GM10248 (cell line): ENCODE measurements at regions of chr5 and their contacts with region 1.

Region 1: DNA sequence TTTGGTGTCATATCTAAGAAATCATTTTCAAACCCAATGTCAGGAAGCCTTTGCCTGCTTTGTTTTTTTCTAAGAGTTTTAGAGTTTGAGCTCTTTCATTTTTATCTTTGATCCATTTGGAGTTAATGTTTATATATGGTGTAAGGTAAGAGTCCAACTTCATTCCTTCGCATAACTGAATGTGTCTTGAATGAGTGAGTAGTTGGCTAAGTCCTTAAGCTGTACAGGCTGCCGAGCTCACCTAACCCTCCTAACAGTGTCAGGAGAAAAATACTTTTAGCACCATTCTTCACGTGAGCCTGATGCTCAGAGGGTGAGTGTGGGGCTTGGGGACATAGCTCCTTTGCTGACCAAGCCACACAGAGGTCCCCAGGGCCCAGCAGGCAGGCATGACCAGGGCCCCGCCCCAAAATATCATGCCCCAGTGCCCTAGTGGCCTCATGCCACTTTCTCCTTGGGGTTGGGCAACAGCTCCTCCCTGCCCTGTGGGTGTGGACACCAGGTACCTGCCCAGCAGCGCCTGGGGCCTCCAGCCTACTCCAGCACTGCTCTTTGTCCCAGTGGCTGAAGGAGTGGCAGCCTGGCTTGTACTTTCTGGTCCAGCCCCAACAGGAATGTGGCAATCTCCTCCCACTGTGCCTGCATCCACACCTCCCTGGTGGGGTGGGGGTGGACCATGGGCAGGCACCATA is 17.2 kb downstream of the PPARGC1B start:
- DNase-seq: no peak
- CTCF ChIP-seq: no peak

Region 2: GRCh38 chr5:149702934-149703646 is 44.2 kb before region 1 on chr5:
- CTCF ChIA-PET with region 1: no interaction called
- POLR2A ChIA-PET with region 1: no interaction called
- DNase-seq: no peak
- CTCF ChIP-seq: no peak

Region 3: DNA sequence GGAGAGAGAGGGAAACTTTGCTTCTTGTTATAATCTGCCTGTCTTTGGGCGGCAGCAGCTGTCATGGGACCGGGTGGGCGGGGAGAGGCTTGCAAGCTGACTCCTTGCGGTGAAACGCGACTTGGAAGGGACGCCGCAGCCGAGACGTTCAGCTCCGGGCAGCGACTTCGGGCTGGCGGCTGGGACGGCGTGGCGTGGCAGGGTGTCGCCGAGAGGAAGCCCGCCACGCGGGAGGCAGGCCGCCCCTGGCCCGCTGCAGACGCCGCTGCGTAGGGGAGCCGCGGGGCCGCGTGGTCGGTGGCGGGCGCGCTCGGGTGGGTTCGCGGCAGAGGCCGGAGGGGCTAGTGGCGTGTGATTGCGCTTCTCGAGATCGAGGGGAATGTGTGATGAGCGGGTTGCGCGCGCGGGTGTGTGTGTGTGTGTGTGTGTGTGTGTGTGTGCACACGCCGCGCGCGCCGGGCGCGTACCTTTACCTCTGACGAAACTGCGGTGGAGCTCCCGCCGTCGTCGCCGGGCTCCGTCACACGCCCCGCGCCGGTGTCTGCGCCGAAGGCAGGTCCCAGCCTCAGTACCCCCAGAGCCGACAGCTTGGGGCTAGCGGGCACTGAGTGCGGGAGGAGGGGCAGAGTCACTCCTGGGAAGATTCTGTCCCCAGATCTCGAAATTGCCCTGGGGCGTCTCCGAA is 15.5 kb before region 1 on chr5:
- CTCF ChIA-PET with region 1: interaction called, 11 read pairs
- POLR2A ChIA-PET with region 1: interaction called, 12 read pairs
- DNase-seq: peak; percentile 89
- CTCF ChIP-seq: no peak